Transverse colon (tissue), 4 donors: ENCODE measurements at regions of chr2 and their contacts with region 1.

Region 1: GRCh38 chr2:23760736-23761135 is 166.2 kb downstream of the ATAD2B start:
- DNase-seq: no peak
- H3K4me3 ChIP-seq: no peak overlapping the region
- H3K27ac ChIP-seq: no peak overlapping the region
- H3K4me1 ChIP-seq: peaks cover 0 to 9% (median 4%) of the 10 kb centered on the region in 4 donors
- H3K27me3 ChIP-seq: no peaks in the 10 kb centered on the region
- CTCF ChIP-seq: peak in 4 of 5 experiments; percentile 17 to 31 (median 27)
- EP300 ChIP-seq: no peak
- POLR2A ChIP-seq: no peak

Region 2: DNA sequence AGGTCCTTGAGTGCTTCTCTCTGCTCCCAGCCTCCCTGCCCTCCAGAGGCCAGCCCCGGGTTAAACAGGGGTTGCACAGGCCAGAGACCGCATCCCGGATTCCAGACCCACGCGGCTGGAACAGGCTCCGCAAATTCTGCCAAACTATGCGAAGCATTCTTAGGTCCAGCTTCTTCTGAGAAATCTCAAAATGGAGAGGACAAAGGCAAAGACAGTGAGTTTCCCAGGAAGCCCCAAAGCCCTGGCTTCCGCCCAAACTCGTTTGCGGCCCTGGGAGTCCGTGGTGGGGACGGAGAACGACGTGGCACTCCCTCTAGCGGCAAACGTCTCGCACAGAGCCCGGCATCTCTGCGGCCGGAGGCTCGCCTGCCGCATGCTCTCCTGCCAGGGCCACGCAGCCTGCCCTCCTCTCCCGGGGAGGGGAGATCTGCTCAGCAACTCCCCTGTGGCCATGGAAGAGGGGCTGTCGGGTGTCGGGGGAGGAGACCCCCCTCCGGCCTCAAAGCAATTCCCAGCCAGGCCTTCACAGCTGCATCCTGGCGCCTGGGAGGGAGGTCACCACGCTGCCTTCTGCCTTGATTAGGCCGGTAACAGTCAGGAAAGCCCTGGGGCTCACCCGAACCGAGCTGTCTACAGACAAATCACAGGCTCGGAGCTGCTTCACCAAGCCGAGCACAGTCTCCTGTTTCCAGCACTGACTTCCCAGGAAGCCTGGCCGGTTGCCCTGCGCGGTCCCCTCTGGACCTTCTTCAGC is 409.2 kb before region 1 on chr2:
- in situ Hi-C with region 1: loop called in 1 of 4 experiments (anchors 25 kb)
- intact Hi-C with region 1: no loop called
- DNase-seq: peak; percentile 79
- H3K4me3 ChIP-seq: no peak overlapping the region
- H3K27ac ChIP-seq: peak overlapping the region in 3 of 4 donors; percentile 1 to 34 (median 23)
- H3K4me1 ChIP-seq: peaks cover 0 to 10% (median 5%) of the 10 kb centered on the region in 4 donors
- H3K27me3 ChIP-seq: no peaks in the 10 kb centered on the region
- CTCF ChIP-seq: peak; percentile 71 to 87 (median 83)
- EP300 ChIP-seq: no peak
- POLR2A ChIP-seq: no peak